AG04450 (cell line): ENCODE measurements at regions of chrX and their contacts with region 1.

Region 1: GRCh38 chrX:49915361-49916222 is 6.8 kb upstream of the CLCN5 start:
- DNase-seq: peak; percentile 15
- H3K4me3 ChIP-seq: no peak overlapping the region
- H3K27ac ChIP-seq: no peak overlapping the region
- H3K27me3 ChIP-seq: no peaks in the 10 kb centered on the region
- CTCF ChIP-seq: peak; percentile 80

Region 2: GRCh38 chrX:49767236-49767635 is 148.4 kb before region 1 on chrX:
- CTCF ChIA-PET with region 1: no interaction called
- POLR2A ChIA-PET with region 1: no interaction called
- DNase-seq: no peak
- H3K4me3 ChIP-seq: no peak overlapping the region
- H3K27ac ChIP-seq: no peak overlapping the region
- H3K27me3 ChIP-seq: no peaks in the 10 kb centered on the region
- CTCF ChIP-seq: no peak

Region 3: GRCh38 chrX:50579955-50580354 is 664.4 kb after region 1 on chrX:
- CTCF ChIA-PET with region 1: interaction called, 12 read pairs
- POLR2A ChIA-PET with region 1: no interaction called
- DNase-seq: peak; percentile 11
- H3K4me3 ChIP-seq: no peak overlapping the region
- H3K27ac ChIP-seq: no peak overlapping the region
- H3K27me3 ChIP-seq: peaks cover 3% of the 10 kb centered on the region
- CTCF ChIP-seq: peak; percentile 56